Sigmoid colon (tissue), 7 donors: ENCODE measurements at regions of chr2 and their contacts with region 1.

Region 1: GRCh38 chr2:8215159-8215863 is 466.5 kb upstream of the ID2 start:
- DNase-seq: no peak
- H3K4me3 ChIP-seq: no peak overlapping the region
- H3K27ac ChIP-seq: no peak overlapping the region
- H3K4me1 ChIP-seq: peaks cover 0 to 30% (median 3%) of the 10 kb centered on the region in 4 donors
- H3K27me3 ChIP-seq: no peaks in the 10 kb centered on the region
- CTCF ChIP-seq: no peak
- EP300 ChIP-seq: no peak
- POLR2A ChIP-seq: no peak

Region 2: GRCh38 chr2:7725171-7725849 is 490.0 kb before region 1 on chr2:
- intact Hi-C with region 1: loop called (anchors 5 kb)
- DNase-seq: no peak
- H3K4me3 ChIP-seq: no peak overlapping the region
- H3K27ac ChIP-seq: peak overlapping the region in 2 of 4 donors; percentile 3 to 24
- H3K4me1 ChIP-seq: peaks cover 0 to 11% (median 8%) of the 10 kb centered on the region in 4 donors
- H3K27me3 ChIP-seq: no peaks in the 10 kb centered on the region
- CTCF ChIP-seq: peak in 1 of 4 experiments; percentile 5
- EP300 ChIP-seq: no peak
- POLR2A ChIP-seq: no peak

Region 3: DNA sequence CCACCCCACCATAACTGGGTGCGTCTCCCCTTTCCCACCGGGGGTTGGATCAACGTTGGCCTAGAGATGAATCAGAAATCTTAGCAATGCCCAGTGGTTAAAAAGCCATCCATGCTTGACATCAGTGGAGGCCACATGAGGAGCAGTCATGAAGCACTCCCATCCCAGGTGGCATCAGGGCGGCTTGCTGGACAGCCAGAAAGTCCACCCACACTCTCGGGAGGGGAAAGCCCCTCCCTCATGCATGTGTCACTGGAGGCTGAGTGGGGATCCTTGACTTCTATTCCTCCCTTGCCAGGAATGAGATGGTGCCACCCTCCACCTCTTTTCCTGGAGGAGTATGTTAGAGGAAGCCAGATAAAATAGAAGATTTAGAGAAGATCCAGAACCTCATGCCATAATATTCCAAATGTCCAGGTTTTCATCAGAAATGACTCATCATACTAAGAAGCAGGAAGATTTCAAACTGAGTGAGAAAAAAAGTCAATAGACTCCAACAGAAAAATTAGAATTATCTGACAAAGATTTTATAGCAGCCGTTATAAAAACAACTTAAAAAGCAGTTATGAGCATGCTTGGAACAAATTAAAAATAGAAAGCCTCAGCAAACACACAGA is 40.6 kb before region 1 on chr2:
- intact Hi-C with region 1: loop called (anchors 5 kb)
- DNase-seq: no peak
- H3K4me3 ChIP-seq: no peak overlapping the region
- H3K27ac ChIP-seq: peak overlapping the region in 2 of 4 donors; percentile 60 to 62
- H3K4me1 ChIP-seq: peaks cover 0 to 34% (median 18%) of the 10 kb centered on the region in 4 donors
- H3K27me3 ChIP-seq: no peaks in the 10 kb centered on the region
- CTCF ChIP-seq: no peak
- EP300 ChIP-seq: no peak
- POLR2A ChIP-seq: no peak